Psoas muscle (tissue), 8 donors: ENCODE measurements at regions of chr1 and their contacts with region 1.

Region 1: DNA sequence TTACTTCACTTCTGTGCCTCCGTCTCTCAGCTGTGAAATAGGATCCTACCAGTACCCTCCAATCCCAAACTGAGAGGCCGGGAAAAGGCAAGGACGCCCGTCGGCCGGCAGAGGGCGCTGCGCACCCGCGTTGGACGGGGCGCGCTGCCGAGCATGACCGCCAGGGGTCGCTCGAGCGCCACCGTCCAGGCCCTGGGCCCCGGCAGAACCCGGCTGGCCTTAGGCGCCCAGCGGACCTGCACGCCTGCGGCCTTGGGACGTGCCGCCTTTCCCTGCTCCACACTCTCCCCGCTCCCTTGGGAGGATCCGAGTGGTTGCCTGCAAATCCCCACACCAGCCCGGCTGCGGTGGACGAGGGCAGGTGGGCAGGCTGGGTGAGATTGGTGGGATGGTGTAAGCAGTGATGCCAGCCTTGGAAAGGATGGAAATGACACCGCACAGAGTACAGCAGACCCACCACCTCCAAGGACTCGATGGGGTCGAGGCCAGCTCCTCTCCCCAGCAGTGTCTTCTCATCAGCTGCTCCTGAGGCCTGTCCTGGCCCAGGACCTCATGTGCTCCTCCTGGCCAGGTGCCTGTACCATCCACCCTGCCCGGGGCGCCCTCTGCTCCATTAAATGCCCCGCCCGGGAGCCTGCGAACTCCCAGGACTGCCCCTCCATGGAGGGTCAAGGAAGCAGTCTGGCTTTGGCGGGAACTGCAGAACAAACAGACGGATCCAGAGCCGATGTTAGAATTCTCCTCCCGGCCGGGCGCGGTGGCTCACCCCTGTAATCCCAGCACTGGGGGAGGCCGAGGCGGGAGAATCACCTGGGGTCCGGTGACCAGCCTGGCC is 47.4 kb upstream of the LBR start:
- DNase-seq: peak; percentile 64 to 85
- ATAC-seq: peak; percentile 91 to 95 (median 93)
- H3K4me3 ChIP-seq: peak overlapping the region; percentile 37
- H3K27ac ChIP-seq: no peak overlapping the region
- H3K4me1 ChIP-seq: peaks cover 14% of the 10 kb centered on the region
- H3K27me3 ChIP-seq: no peaks in the 10 kb centered on the region
- CTCF ChIP-seq: peak; percentile 100

Region 2: GRCh38 chr1:225772323-225772768 is 297.1 kb after region 1 on chr1:
- intact Hi-C with region 1: loop called (anchors 1 to 2 kb)
- DNase-seq: peak; percentile 80 to 89
- ATAC-seq: peak; percentile 90 to 93 (median 90)
- H3K4me3 ChIP-seq: no peak overlapping the region
- H3K27ac ChIP-seq: peak overlapping the region; percentile 5
- H3K4me1 ChIP-seq: peaks cover 31% of the 10 kb centered on the region
- H3K27me3 ChIP-seq: no peaks in the 10 kb centered on the region
- CTCF ChIP-seq: peak; percentile 87

Region 3: GRCh38 chr1:225845571-225846259 is 370.5 kb after region 1 on chr1:
- intact Hi-C with region 1: loop called (anchors 1 to 5 kb)
- DNase-seq: peak; percentile 82 to 90
- ATAC-seq: peak; percentile 75 to 89 (median 80)
- H3K4me3 ChIP-seq: no peak overlapping the region
- H3K27ac ChIP-seq: peak overlapping the region; percentile 30
- H3K4me1 ChIP-seq: no peaks in the 10 kb centered on the region
- H3K27me3 ChIP-seq: no peaks in the 10 kb centered on the region
- CTCF ChIP-seq: peak; percentile 68

Region 4: DNA sequence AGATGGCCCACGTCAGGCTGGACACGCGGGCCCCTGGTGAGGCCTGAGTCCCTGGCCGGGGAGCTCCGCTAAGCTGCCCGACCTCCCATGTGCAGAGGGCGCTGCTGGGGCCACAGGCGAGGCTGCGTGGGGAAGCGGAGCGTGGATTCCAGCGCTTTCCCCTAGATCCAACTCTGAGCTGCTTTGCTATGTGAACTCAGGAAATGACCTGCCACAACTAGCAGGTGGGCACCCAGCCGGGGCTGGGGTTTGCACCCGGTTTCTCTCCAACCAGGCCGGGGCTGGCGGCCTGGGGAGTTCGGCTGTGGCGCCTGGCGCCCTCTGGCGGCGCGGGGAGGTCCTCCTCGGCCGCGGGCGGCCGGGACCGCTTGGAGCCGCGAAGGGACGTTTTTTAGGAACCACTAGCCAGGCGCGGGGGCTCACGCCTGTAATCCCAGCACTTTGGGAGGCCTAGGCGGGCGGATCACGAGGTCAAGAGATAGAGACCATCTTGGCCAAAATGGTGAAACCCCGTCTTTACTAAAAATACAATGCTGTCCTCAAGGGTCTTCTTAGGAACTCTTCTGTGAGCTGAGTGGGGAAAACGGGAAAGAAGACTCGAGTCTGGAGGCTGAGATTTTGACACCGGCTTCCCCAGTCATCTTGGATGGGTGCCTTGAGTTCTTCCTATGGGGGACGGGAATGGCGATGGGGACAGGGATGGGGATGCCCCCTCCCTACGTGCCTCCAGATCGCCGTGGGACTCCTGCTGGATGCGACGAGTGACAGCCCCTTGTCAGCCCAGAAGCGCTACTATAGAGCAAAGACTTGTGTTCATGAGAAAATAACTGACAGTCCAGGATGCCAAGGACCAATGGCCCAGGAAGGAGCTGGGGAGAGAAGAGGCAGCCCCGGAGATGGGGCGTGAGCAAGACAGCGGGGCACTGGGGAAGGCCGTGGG is 436.3 kb after region 1 on chr1:
- intact Hi-C with region 1: loop called (anchors 1 to 5 kb)
- DNase-seq: peak; percentile 70 to 84
- ATAC-seq: peak; percentile 85 to 96 (median 88)
- H3K4me3 ChIP-seq: peak overlapping the region; percentile 31
- H3K27ac ChIP-seq: no peak overlapping the region
- H3K4me1 ChIP-seq: no peaks in the 10 kb centered on the region
- H3K27me3 ChIP-seq: no peaks in the 10 kb centered on the region
- CTCF ChIP-seq: peak; percentile 88

Region 5: DNA sequence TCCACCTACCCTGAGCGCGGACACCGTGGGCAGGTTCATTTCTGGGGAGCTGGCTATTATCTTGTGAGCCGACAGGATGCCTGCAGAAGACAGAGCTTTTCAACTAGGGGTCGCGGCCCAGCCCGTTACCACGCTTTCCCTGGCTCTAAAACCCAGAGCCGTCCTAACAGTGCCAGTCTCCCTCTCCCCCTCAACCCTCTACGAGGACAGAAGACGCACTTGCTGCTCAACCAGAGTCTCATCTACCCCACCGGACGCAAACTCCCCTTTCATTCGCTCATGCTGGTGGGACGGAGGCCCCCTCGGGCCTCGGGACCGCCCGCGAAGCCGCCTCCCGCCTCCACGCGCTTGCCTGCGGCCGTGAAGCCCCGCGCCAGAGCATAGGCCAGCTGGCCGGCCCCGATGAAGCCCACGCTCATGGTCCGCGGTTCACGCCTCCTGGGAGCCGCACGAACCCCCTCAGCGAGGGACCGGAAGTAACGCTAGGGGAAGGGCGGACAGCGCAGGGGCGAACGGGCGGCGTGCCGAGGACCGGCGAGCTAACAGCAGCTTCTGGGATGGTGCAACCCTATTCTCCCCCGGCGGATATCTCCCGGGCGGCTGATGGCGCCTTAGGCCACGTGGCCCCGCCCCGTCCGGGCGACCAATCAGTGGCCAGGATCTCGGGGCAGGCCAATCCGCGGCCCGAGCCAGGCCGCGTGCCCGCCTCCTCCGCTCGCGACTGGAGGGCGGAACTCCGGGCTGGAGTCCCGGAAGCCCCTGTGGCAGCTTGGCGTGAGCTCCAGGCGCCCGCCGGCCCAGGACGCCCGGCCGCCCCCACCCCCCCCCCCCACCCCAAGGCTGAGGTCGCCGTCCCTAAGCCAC is 448.7 kb after region 1 on chr1 and contains the start of gene PYCR2:
- intact Hi-C with region 1: loop called in 1 of 2 experiments (anchors 5 kb)
- DNase-seq: peak; percentile 97 to 99
- ATAC-seq: peak; percentile 99 to 100 (median 99)
- H3K4me3 ChIP-seq: peak within 1 kb of the TSS; percentile 98
- H3K27ac ChIP-seq: peak within 1 kb of the TSS; percentile 97
- H3K4me1 ChIP-seq: peaks cover 14% of the 10 kb centered on the region
- H3K27me3 ChIP-seq: no peaks in the 10 kb centered on the region
- CTCF ChIP-seq: no peak
- total RNA-seq, gene PYCR2: 46.0 to 59.4 (median 53.7) TPM